ENCODE measurements at regions of chr5 and their contacts with region 1.

Region 1: GRCh38 chr5:59810041-59810440 is 83.5 kb downstream of the PDE4D start:
- DNase-seq: peak; percentile 16
- ATAC-seq: peak; percentile 38; the same call in 2 of the 3 replicates
- H3K4me3 ChIP-seq: peak overlapping the region in 2 of 3 experiments; percentile 30 to 54; a peak in 2 of 6 replicates
- H3K27ac ChIP-seq: no peak overlapping the region
- H3K4me1 ChIP-seq: 0 out of 2 replicates have a peak, but pooled peaks cover 5% of the 10 kb centered on the region
- H3K27me3 ChIP-seq: no peaks in the 10 kb centered on the region
- CTCF ChIP-seq: peak; percentile 79
- EP300 ChIP-seq: no peak
- POLR2A ChIP-seq: no peak
- RAD21 ChIP-seq: peak; percentile 35; the same call in 1 of the 2 replicates

Region 2: GRCh38 chr5:60162441-60162840 is 352.4 kb after region 1 on chr5:
- CTCF ChIA-PET with region 1: interaction called, 3 read pairs
- POLR2A ChIA-PET with region 1: no interaction called
- in situ Hi-C with region 1: no loop called
- intact Hi-C with region 1: loop called (anchors 1 kb)
- DNase-seq: no peak
- ATAC-seq: no peak
- H3K4me3 ChIP-seq: no peak overlapping the region
- H3K27ac ChIP-seq: no peak overlapping the region
- H3K4me1 ChIP-seq: no peaks in the 10 kb centered on the region
- H3K27me3 ChIP-seq: no peaks in the 10 kb centered on the region
- CTCF ChIP-seq: no peak
- EP300 ChIP-seq: no peak
- POLR2A ChIP-seq: no peak
- RAD21 ChIP-seq: no peak

Region 3: DNA sequence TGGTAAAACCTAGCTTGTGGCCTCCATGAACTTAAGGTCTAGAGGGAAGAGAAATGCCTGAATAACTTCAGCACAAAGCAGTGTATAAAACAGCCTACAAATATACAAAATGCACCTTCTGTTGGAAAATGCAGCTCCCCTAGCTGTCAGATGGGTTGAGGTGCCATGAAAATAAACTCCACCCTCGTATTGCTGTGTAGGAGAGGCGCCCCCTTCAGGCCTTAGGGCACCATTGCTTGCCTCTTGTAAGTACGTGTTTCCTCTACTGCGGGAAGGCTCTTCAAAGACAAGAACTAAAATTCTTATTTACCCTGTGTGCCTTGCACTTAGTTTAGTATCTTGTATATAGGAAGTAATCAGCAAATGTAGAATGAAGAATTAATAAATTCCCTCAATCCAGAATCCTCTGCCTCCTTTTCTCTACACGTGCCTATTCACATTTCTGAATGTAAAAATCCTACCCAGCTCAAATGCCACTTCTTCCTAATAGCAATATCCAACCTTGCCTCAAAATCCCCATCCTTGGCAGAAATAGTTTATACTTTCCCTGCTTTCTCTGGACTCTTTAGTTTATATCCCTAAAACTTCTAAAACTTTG is 477.2 kb after region 1 on chr5:
- CTCF ChIA-PET with region 1: interaction called, 4 read pairs
- POLR2A ChIA-PET with region 1: no interaction called
- in situ Hi-C with region 1: loop called (anchors 10 kb)
- intact Hi-C with region 1: loop called (anchors 10 kb)
- DNase-seq: peak; percentile 69
- ATAC-seq: peak; percentile 89
- H3K4me3 ChIP-seq: no peak overlapping the region
- H3K27ac ChIP-seq: no peak overlapping the region
- H3K4me1 ChIP-seq: peaks cover 14% of the 10 kb centered on the region
- H3K27me3 ChIP-seq: no peaks in the 10 kb centered on the region
- CTCF ChIP-seq: peak; percentile 62
- EP300 ChIP-seq: no peak
- POLR2A ChIP-seq: no peak
- RAD21 ChIP-seq: no peak

Region 4: GRCh38 chr5:60382716-60383115 is 572.7 kb after region 1 on chr5:
- CTCF ChIA-PET with region 1: no interaction called
- POLR2A ChIA-PET with region 1: no interaction called
- in situ Hi-C with region 1: no loop called
- intact Hi-C with region 1: loop called (anchors 2 kb)
- DNase-seq: no peak
- ATAC-seq: no peak
- H3K4me3 ChIP-seq: no peak overlapping the region
- H3K27ac ChIP-seq: no peak overlapping the region
- H3K4me1 ChIP-seq: peaks cover 7% of the 10 kb centered on the region; the same call in 1 of the 2 replicates
- H3K27me3 ChIP-seq: no peaks in the 10 kb centered on the region
- CTCF ChIP-seq: peak; percentile 62
- EP300 ChIP-seq: no peak
- POLR2A ChIP-seq: no peak
- RAD21 ChIP-seq: no peak

Region 5: GRCh38 chr5:60457233-60457632 is 647.2 kb after region 1 on chr5:
- CTCF ChIA-PET with region 1: no interaction called
- POLR2A ChIA-PET with region 1: no interaction called
- in situ Hi-C with region 1: no loop called
- intact Hi-C with region 1: loop called (anchors 5 kb)
- DNase-seq: no peak
- ATAC-seq: no peak
- H3K4me3 ChIP-seq: no peak overlapping the region
- H3K27ac ChIP-seq: no peak overlapping the region
- H3K4me1 ChIP-seq: peaks cover 56% of the 10 kb centered on the region
- H3K27me3 ChIP-seq: no peaks in the 10 kb centered on the region
- CTCF ChIP-seq: no peak
- EP300 ChIP-seq: no peak
- POLR2A ChIP-seq: no peak
- RAD21 ChIP-seq: no peak

Region 6: DNA sequence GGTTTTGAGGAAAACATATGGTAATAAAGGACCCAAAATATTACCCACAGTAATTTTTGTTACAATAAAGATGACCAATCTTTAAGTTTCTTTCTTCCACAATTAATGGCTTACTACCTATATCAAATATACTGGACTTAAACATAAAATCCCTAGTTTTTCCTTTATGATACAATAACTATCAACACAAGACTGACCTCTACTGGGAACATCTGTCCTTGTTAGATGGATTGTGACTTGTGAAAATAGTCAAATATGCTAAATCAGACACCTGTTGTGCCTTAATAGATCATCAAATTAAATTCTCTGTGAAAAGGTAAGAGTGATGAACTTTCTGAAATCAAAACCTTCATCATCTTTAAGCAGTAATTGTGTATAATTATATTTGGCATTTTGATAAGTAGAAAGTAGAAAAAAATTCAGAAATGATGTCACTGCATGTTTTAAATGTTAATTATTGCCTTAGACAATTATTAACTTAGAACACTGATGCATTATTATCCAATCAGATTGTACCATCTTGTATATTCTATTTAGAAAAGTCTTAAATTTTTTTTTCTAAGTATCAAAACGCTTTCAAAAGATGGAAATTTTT is 776.4 kb after region 1 on chr5:
- CTCF ChIA-PET with region 1: interaction called, 5 read pairs
- POLR2A ChIA-PET with region 1: no interaction called
- in situ Hi-C with region 1: loop called (anchors 10 kb)
- intact Hi-C with region 1: no loop called
- DNase-seq: peak; percentile 54
- ATAC-seq: 0 out of 3 replicates have a peak, but pooled peaks have one; percentile 30
- H3K4me3 ChIP-seq: no peak overlapping the region
- H3K27ac ChIP-seq: no peak overlapping the region
- H3K4me1 ChIP-seq: peaks cover 12% of the 10 kb centered on the region; the same call in 1 of the 2 replicates
- H3K27me3 ChIP-seq: no peaks in the 10 kb centered on the region
- CTCF ChIP-seq: peak; percentile 67
- EP300 ChIP-seq: no peak
- POLR2A ChIP-seq: no peak
- RAD21 ChIP-seq: peak; percentile 62

Region 7: DNA sequence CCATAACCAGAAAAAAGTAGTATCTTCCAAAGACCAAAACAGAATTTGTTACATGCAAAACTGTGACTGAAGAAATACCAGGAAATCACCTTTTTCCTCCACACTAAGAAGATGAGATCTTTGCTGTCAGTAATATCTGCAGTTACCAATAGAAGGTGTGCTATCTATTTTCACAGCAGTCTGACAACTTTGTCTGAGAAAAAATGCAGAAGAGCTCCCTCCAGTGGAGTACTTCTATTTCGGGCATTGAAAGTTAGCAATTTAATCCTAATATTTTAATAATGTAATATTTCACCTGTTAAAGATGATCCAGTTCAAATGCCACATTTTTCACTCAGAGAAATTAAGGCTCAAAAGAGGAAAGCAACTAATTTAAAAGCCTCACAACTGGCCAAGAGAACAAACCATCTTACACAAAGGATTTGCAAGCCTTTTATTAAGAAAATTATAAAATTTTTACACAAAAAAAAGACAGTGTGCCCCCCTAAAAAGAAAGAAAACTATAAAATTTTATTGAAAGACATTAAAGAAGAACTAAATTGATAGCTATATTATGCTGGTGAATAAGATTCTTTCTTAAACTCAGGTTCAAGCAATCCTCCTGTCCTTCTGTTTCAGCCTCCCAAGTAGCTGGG is 839.4 kb after region 1 on chr5:
- CTCF ChIA-PET with region 1: interaction called, 6 read pairs
- POLR2A ChIA-PET with region 1: no interaction called
- in situ Hi-C with region 1: no loop called
- intact Hi-C with region 1: loop called (anchors 1 kb)
- DNase-seq: peak; percentile 59
- ATAC-seq: peak; percentile 66
- H3K4me3 ChIP-seq: no peak overlapping the region
- H3K27ac ChIP-seq: no peak overlapping the region
- H3K4me1 ChIP-seq: peaks cover 22% of the 10 kb centered on the region
- H3K27me3 ChIP-seq: no peaks in the 10 kb centered on the region
- CTCF ChIP-seq: peak; percentile 65
- EP300 ChIP-seq: no peak
- POLR2A ChIP-seq: no peak
- RAD21 ChIP-seq: peak; percentile 52; the same call in 1 of the 2 replicates